ENCODE measurements at regions of chr6 and their contacts with region 1.

Region 1: DNA sequence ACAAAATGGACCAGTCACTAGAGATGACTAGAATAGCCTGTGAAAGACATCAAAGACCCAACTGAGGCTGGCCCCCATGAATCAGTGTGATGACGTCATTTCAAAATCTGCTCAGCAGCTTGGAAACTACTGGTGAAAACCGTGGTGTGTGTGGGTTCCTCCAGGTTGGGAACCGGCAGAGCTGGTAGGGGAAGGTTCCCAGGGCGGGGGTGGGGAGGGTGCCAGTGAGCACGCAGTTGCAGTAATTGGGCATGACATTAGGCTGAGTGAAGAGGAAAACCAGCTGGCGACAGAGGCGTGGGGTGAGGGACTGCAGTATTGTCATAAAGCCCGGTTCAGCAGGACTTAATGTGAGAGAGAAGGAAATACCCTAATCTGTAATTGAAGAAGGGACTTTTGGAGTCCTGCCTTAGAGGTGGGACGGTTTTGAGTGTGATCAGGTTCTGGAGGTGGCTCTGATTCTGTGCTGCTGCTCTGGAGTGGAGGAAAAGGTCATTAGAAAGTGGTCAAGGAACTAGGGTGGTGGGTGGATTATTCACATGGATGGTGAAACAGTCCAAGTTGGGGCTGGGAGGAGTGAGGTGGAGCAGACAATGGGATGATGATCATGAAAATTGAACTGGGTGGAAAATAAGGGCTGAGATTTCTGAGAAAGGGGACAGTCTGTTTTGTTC is 52.0 kb upstream of the MTHFD1L start:
- DNase-seq: peak; percentile 89
- H3K4me3 Mint-ChIP-seq: peak overlapping the region; percentile 11
- H3K27ac Mint-ChIP-seq: peak overlapping the region; percentile 93
- H3K4me1 Mint-ChIP-seq: peaks cover 27% of the 10 kb centered on the region
- H3K27me3 Mint-ChIP-seq: peaks cover 11% of the 10 kb centered on the region

Region 2: GRCh38 chr6:150068720-150069648 is 744.5 kb before region 1 on chr6 and contains the start of gene ULBP3:
- CTCF ChIA-PET with region 1: interaction called, 14 read pairs
- POLR2A ChIA-PET with region 1: no interaction called
- intact Hi-C with region 1: loop called (anchors 5 kb)
- DNase-seq: peak; percentile 87
- H3K4me3 Mint-ChIP-seq: peak within 1 kb of the TSS; percentile 66
- H3K27ac Mint-ChIP-seq: no peak within 1 kb of the TSS
- H3K4me1 Mint-ChIP-seq: peaks cover 11% of the 10 kb centered on the region
- H3K27me3 Mint-ChIP-seq: peaks cover 13% of the 10 kb centered on the region
- total RNA-seq, gene ULBP3: 0.61 TPM in 1 of 2 experiments, not detected in the other

Region 3: DNA sequence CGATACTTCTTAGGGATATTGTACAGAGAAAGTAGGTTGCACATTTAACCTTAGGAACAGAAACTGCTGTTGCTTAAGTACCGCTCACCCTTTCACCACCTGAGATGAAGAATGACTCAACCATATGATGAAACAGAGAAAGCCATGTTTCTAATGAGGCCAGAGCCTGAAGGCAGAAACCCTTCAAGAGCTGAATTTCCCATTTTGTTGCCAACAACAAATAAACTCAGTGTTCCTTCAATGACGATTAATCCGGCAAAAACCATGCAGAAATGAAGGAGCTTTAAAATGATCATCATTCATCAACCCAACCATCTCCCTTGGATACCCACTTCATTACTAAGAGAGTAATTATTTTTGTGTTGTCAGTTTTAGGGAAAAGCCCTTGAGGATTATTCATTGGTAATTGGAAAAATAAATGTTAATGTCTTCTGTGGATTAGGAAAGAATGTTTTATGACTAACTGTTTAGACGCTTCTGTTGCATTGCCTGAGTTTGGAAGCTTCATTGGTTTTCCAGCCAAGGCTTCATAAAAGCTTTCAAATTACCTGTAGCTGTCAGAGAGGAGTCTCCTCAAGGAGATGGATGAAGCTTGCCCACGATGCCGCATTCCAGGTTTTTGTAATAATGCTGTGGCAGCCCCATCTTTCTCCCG is 556.7 kb before region 1 on chr6:
- CTCF ChIA-PET with region 1: no interaction called
- POLR2A ChIA-PET with region 1: no interaction called
- intact Hi-C with region 1: loop called (anchors 5 kb)
- DNase-seq: no peak
- H3K4me3 Mint-ChIP-seq: no peak overlapping the region
- H3K27ac Mint-ChIP-seq: no peak overlapping the region
- H3K4me1 Mint-ChIP-seq: peaks cover 38% of the 10 kb centered on the region
- H3K27me3 Mint-ChIP-seq: peaks cover 29% of the 10 kb centered on the region

Region 4: GRCh38 chr6:150417899-150418826 is 395.3 kb before region 1 on chr6:
- CTCF ChIA-PET with region 1: interaction called, 99 read pairs
- POLR2A ChIA-PET with region 1: interaction called, 8 read pairs
- intact Hi-C with region 1: loop called (anchors 1 kb)
- DNase-seq: peak; percentile 28
- H3K4me3 Mint-ChIP-seq: peak overlapping the region; percentile 50
- H3K27ac Mint-ChIP-seq: peak overlapping the region; percentile 67
- H3K4me1 Mint-ChIP-seq: peaks cover 30% of the 10 kb centered on the region
- H3K27me3 Mint-ChIP-seq: peaks cover 24% of the 10 kb centered on the region

Region 5: DNA sequence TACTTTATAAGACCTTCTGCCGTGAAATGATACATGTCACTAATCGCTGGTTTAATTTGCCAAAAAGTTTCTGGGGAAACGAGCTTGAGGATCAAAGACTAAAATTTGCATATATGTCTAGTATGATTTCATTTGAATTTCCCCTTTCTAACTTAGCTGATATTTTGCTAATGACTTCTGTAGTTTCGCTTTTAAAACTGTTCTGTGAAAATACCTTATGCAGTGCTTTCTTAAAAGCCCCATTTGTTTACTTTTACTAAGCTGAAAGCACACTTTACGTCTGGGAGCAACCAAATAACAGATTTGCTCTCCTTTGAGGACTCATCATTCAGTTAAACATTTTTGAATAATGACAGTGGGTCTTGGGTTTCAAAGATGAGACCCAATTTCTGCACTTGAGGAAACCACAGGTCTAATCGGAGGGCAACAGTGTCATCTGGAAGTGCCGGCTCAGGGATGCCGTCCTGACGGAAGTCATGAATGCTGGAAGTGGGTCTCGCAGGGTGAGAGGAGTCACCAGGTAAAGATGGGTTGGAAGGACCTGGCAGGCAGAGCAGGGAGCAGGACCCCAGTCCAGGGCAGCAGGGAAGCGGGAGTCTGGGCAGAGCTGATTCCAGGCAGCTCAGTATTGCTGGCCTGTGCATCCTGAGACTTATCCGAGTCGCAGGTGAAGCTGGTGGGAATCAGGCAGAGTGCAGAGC is 180.5 kb before region 1 on chr6:
- CTCF ChIA-PET with region 1: no interaction called
- POLR2A ChIA-PET with region 1: interaction called, 6 read pairs
- intact Hi-C with region 1: loop called (anchors 2 kb)
- DNase-seq: peak; percentile 17
- H3K4me3 Mint-ChIP-seq: peak overlapping the region; percentile 71
- H3K27ac Mint-ChIP-seq: peak overlapping the region; percentile 68
- H3K4me1 Mint-ChIP-seq: peaks cover 45% of the 10 kb centered on the region
- H3K27me3 Mint-ChIP-seq: peaks cover 12% of the 10 kb centered on the region

Region 6: GRCh38 chr6:150775415-150776203 is 37.8 kb before region 1 on chr6:
- CTCF ChIA-PET with region 1: no interaction called
- POLR2A ChIA-PET with region 1: no interaction called
- intact Hi-C with region 1: no loop called
- DNase-seq: no peak
- H3K4me3 Mint-ChIP-seq: no peak overlapping the region
- H3K27ac Mint-ChIP-seq: no peak overlapping the region
- H3K4me1 Mint-ChIP-seq: peaks cover 4% of the 10 kb centered on the region
- H3K27me3 Mint-ChIP-seq: no peaks in the 10 kb centered on the region

Region 7: DNA sequence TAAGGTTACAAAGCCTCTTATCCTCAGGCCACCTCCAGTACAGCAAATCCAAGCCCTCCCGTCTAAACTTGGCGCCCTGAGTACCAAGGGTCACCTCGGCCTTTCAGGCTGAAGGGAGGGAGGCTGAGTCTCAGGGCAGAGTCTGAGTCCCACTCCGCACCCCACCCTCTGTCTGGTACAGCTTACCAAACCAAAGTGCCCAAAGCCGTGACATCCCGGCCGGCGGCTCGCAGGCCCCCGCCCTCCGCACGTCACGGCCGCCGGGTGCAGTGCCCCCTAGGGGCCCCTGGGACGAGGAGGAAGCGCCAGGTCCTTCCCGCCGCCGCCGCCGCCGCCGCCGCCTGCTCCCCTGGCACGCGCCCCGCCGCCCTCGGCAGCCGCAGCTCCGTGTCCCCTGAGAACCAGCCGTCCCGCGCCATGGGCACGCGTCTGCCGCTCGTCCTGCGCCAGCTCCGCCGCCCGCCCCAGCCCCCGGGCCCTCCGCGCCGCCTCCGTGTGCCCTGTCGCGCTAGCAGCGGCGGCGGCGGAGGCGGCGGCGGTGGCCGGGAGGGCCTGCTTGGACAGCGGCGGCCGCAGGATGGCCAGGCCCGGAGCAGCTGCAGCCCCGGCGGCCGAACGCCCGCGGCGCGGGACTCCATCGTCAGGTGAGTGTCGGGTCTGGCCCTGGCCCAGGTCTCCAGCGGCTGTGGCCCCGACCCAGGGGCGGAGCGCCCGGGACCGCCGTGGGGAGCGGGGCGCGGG is 52.1 kb after region 1 on chr6 and contains the start of gene MTHFD1L:
- CTCF ChIA-PET with region 1: interaction called, 6 read pairs
- POLR2A ChIA-PET with region 1: interaction called, 3 read pairs
- intact Hi-C with region 1: loop called (anchors 1 kb)
- DNase-seq: peak; percentile 84
- H3K4me3 Mint-ChIP-seq: peak within 1 kb of the TSS; percentile 92
- H3K27ac Mint-ChIP-seq: peak within 1 kb of the TSS; percentile 91
- H3K4me1 Mint-ChIP-seq: peaks cover 22% of the 10 kb centered on the region
- H3K27me3 Mint-ChIP-seq: peaks cover 13% of the 10 kb centered on the region
- total RNA-seq, gene MTHFD1L: 115 to 119 TPM